Naive thymus-derived CD4-positive, alpha-beta T cell (primary cell): ENCODE measurements at regions of chr5 and their contacts with region 1.

Region 1: DNA sequence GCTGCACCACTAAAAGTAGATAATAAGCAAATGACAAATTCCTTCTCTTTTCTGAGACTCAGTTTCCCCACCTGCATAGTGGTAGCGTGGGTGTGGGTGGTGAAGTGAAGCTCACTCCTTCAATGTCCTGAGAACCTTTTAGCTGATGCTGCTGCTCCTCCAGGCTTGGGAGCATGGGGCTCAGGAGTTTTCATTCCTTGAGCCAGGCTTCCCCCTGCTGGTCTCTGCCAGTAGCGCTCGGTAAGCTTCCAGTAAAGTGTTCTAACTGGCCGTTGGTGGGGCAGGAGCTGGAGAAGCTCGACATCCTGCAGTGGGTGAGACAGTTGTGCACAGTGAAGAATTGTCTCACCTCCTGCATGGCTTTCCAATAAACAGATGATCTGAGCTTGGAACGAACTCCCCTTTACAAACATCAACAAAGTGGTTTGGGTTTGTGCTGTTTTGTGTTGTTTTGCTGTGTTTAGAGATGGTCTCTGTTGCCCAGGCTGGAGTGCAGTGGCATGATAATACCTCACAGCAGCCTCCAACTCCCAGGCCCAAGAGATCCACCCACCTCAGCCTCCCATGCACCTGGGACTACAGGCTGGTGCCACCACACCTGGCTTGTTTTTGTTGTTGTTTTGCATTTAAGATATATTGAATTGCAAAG is 34.6 kb downstream of the SPARC start:
- DNase-seq: peak; percentile 10 to 76 (median 60)
- ATAC-seq: peak; percentile 85
- H3K4me3 ChIP-seq: no peak overlapping the region
- H3K4me3 Mint-ChIP-seq: no peak overlapping the region
- H3K27ac ChIP-seq: no peak overlapping the region
- H3K27ac Mint-ChIP-seq: peak overlapping the region in 1 of 9 donors; percentile 3
- H3K4me1 ChIP-seq: no peaks in the 10 kb centered on the region
- H3K4me1 Mint-ChIP-seq: peaks cover 0 to 4% (median 0%) of the 10 kb centered on the region in 7 donors
- H3K27me3 ChIP-seq: no peaks in the 10 kb centered on the region
- H3K27me3 Mint-ChIP-seq: peaks cover 0 to 21% (median 0%) of the 10 kb centered on the region in 5 donors

Region 2: DNA sequence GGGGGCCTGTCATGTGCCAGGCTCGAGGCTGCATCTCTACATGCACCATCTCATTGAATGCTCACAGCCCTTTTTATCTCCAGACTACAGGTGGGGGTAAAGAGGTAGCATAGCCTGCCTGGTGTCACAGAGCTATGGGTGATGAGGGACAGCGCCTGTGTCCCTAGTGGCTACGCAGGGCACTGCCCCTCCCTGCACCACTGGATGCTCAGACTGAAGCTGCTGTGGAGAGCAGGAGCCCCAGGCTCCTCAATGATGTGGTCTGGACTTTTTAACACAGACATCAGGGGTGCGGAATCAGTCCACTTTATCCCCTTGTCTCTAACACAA is 1365.3 kb before region 1 on chr5:
- CTCF ChIA-PET with region 1: no interaction called
- POLR2A ChIA-PET with region 1: no interaction called
- intact Hi-C with region 1: loop called in 1 of 2 experiments (anchors 5 kb)
- DNase-seq: peak in 1 of 9 donors; percentile 1
- ATAC-seq: peak; percentile 36
- H3K4me3 ChIP-seq: no peak overlapping the region
- H3K4me3 Mint-ChIP-seq: no peak overlapping the region
- H3K27ac ChIP-seq: no peak overlapping the region
- H3K27ac Mint-ChIP-seq: no peak overlapping the region
- H3K4me1 ChIP-seq: no peaks in the 10 kb centered on the region
- H3K4me1 Mint-ChIP-seq: no peaks in the 10 kb centered on the region
- H3K27me3 ChIP-seq: no peaks in the 10 kb centered on the region
- H3K27me3 Mint-ChIP-seq: peaks cover 0 to 8% (median 0%) of the 10 kb centered on the region in 5 donors

Region 3: DNA sequence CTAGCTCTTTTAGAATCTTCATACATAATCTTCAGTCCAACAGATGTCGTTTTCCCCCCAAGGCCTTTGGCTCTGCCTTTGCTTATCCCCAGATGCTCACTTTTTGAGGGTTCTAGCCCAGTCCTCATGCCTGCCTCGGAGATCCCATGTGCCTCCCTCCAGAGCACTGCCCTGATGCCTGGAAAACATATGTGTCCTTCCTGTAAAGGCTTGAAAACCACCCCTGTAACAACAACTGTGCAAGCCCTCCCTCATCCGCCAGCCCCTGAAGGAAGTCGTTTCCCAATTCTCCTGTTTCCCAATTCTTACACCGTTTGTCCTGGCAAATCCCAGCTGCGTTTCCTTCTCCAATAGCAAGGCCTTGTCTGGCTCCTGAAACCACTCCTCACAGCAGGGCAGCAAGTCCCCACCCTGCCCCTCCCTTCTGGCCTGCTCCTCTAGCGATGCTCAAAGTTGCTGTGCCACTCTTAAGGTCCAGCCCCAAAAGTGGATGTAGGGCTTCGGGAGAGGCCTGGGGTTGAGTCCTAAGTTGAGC is 152.6 kb before region 1 on chr5:
- CTCF ChIA-PET with region 1: interaction called, 3 read pairs
- POLR2A ChIA-PET with region 1: no interaction called
- intact Hi-C with region 1: loop called in 1 of 2 experiments (anchors 1 kb)
- DNase-seq: no peak
- ATAC-seq: no peak
- H3K4me3 ChIP-seq: no peak overlapping the region
- H3K4me3 Mint-ChIP-seq: no peak overlapping the region
- H3K27ac ChIP-seq: no peak overlapping the region
- H3K27ac Mint-ChIP-seq: peak overlapping the region in 2 of 9 donors; percentile 17 to 31
- H3K4me1 ChIP-seq: no peaks in the 10 kb centered on the region
- H3K4me1 Mint-ChIP-seq: peaks cover 5 to 6% (median 6%) of the 10 kb centered on the region in 7 donors
- H3K27me3 ChIP-seq: no peaks in the 10 kb centered on the region
- H3K27me3 Mint-ChIP-seq: no peaks in the 10 kb centered on the region

Region 4: DNA sequence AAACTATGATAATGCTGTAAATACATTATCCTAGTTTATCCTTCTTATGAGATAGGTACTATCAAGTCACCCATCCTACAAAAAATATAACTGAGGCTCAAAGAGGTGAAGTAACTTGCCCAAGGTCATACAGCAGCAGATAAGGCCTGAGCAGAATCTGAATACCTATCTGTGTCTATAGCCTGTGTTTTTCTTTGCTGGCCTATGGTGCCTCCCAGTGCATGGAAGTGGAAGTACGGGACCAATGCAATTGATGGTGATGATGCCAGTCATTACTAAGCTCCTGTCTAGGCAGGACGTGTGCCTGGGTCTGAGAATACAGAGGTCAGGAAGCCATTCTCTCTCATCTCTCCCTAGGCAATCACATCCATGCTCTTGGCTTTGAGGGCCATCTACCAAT is 128.8 kb before region 1 on chr5:
- CTCF ChIA-PET with region 1: interaction called, 6 read pairs
- POLR2A ChIA-PET with region 1: no interaction called
- intact Hi-C with region 1: loop called in 1 of 2 experiments (anchors 1 kb)
- DNase-seq: peak in 7 of 9 donors; percentile 3 to 45 (median 32)
- ATAC-seq: peak; percentile 79
- H3K4me3 ChIP-seq: no peak overlapping the region
- H3K4me3 Mint-ChIP-seq: no peak overlapping the region
- H3K27ac ChIP-seq: no peak overlapping the region
- H3K27ac Mint-ChIP-seq: peak overlapping the region in 2 of 9 donors; percentile 4 to 47
- H3K4me1 ChIP-seq: no peaks in the 10 kb centered on the region
- H3K4me1 Mint-ChIP-seq: peaks cover 2 to 13% (median 9%) of the 10 kb centered on the region in 7 donors
- H3K27me3 ChIP-seq: no peaks in the 10 kb centered on the region
- H3K27me3 Mint-ChIP-seq: peaks cover 0 to 5% (median 0%) of the 10 kb centered on the region in 5 donors

Region 5: GRCh38 chr5:151612689-151613427 is 39.3 kb before region 1 on chr5:
- CTCF ChIA-PET with region 1: interaction called, 10 read pairs
- POLR2A ChIA-PET with region 1: no interaction called
- intact Hi-C with region 1: loop called in 1 of 2 experiments (anchors 1 kb)
- DNase-seq: peak in 6 of 9 donors; percentile 52 to 81 (median 60)
- ATAC-seq: peak; percentile 75
- H3K4me3 ChIP-seq: peak overlapping the region; percentile 37
- H3K4me3 Mint-ChIP-seq: peak overlapping the region in 8 of 10 donors; percentile 59 to 93 (median 78)
- H3K27ac ChIP-seq: peak overlapping the region; percentile 57
- H3K27ac Mint-ChIP-seq: peak overlapping the region in 7 of 9 donors; percentile 71 to 98 (median 87)
- H3K4me1 ChIP-seq: peaks cover 19 to 49% of the 10 kb centered on the region in 2 donors
- H3K4me1 Mint-ChIP-seq: peaks cover 4 to 73% (median 58%) of the 10 kb centered on the region in 7 donors
- H3K27me3 ChIP-seq: no peaks in the 10 kb centered on the region
- H3K27me3 Mint-ChIP-seq: peaks cover 0 to 8% (median 3%) of the 10 kb centered on the region in 5 donors

Region 6: DNA sequence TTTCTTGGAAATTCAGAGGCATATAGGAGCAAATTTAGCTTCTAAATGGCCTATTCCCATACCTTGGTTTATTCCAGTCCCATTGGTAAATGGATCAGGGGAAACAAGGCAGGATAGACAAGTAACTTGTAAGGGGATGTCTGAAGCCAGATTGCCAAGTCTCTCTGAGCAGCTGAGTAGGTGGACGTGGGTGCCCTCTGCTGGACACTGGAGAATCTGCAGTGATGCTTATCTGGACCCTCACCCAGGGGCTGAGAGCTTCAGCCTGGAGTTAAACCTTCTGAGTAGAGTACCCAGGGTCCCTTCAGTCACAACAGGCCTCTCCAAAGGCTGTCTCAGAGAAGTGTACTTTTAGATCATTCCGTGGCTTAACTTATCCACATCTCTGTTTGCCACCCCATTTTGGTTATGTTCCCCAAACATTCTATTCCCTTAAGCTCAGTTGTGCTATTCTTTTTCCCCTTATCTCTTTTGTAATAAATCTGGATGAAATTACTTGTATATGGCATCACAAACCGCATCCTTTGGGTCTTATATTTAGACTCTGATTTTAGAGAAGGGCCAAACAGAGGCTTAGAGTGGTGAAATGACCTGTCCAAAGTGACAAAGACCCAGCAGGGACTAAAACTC is 490.8 kb after region 1 on chr5:
- CTCF ChIA-PET with region 1: no interaction called
- POLR2A ChIA-PET with region 1: no interaction called
- intact Hi-C with region 1: no loop called
- DNase-seq: peak; percentile 21 to 56 (median 44)
- ATAC-seq: peak; percentile 73
- H3K4me3 ChIP-seq: no peak overlapping the region
- H3K4me3 Mint-ChIP-seq: no peak overlapping the region
- H3K27ac ChIP-seq: no peak overlapping the region
- H3K27ac Mint-ChIP-seq: no peak overlapping the region
- H3K4me1 ChIP-seq: no peaks in the 10 kb centered on the region
- H3K4me1 Mint-ChIP-seq: peaks cover 0 to 2% (median 0%) of the 10 kb centered on the region in 7 donors
- H3K27me3 ChIP-seq: no peaks in the 10 kb centered on the region
- H3K27me3 Mint-ChIP-seq: peaks cover 0 to 7% (median 0%) of the 10 kb centered on the region in 5 donors